ENCODE measurements at regions of chr3 and their contacts with region 1.

Region 1: DNA sequence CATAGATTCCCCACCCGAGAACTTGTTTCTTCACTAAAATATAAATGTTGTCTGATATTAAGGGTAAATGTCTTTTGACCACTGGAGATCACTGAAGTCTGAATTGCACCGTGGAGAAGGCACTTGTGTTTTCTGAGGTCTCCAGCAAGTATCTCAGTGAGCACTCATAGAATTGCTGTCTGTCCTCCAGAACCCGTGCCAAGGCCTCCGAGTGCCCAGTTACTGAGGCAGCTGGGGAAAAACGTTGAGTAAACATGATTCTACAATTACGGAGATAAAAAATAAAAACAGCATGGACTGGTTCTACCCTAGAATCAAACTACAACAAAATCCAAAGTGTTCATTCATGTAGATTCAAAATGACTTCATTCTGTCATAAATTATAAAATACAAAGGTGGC is 60.0 kb downstream of the MLH1 start:
- DNase-seq: no peak

Region 2: DNA sequence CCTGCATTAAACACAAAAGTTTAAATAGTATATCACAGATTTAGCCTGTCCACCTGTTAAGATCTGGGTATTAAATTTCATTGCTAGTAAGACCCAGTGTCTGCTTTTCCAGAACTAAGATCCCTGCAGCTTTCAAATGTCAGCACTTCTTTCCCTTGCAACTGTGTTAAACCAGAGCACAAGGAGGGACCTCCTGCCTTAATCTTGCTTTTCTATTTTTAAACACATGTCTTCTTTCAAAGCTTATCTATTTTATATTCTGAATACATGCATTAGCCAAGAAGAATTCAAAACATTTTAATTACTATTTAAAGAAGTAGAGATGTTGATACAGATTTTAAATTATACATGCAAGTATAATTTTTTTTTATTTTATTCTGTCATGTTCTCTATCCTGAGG is 1098.9 kb before region 1 on chr3:
- intact Hi-C with region 1: no loop called
- DNase-seq: no peak

Region 3: GRCh38 chr3:36741285-36741684 is 312.1 kb before region 1 on chr3:
- intact Hi-C with region 1: no loop called
- DNase-seq: no peak

Region 4: GRCh38 chr3:37032961-37033360 is 20.4 kb before region 1 on chr3:
- intact Hi-C with region 1: loop called in 1 of 2 experiments (anchors 2 kb)
- DNase-seq: no peak